ENCODE measurements at regions of chr17 and their contacts with region 1.

Region 1: GRCh38 chr17:38674749-38675615 is at the start of gene EPOP:
- DNase-seq: peak; percentile 85 to 93 (median 91)
- ATAC-seq: peak; percentile 79 to 93 (median 92)
- H3K4me3 ChIP-seq: peak within 1 kb of the TSS; percentile 46 to 79 (median 62)
- H3K27ac ChIP-seq: peak within 1 kb of the TSS in 1 of 12 donors; percentile 42
- H3K4me1 ChIP-seq: peaks cover 4 to 42% (median 24%) of the 10 kb centered on the region in 12 donors
- H3K27me3 ChIP-seq: peaks cover 12 to 61% (median 39%) of the 10 kb centered on the region in 9 donors
- CTCF ChIP-seq: peak in 1 of 12 donors; percentile 4
- POLR2A ChIP-seq: peak in 1 of 2 donors; percentile 53
- total RNA-seq, gene EPOP: 0.25 to 1.6 (median 0.94) TPM

Region 2: DNA sequence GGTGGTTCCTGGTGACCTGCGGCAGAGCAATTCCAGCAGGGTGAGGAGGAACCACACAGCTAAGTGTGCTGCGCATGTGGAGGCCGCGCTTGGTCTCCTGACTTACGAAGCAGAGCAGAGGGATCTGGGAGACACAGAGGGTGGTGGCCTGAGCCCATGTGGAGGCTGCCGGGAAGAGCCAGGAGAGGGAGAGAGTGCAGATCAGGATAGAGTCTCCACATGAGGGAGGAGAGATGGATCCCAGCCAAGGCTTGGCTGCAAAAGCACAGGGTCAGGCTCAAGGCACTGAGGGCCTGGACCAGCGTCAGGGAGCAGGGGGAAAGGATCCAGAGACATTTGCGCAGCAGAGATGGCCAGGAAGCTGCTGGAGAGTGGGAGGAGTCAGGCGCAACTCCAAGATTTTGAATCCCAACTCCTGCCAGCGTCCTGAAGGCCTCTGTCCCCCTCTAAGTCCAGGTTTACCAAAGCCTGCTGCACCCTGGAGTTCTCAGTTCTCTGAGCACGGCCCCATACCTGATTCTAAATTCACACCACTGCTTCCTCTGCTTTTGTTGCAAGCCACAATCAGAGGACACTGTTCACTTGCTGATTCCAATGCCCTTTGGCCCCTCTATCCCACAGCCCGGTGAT is 18.8 kb after region 1 on chr17:
- intact Hi-C with region 1: loop called in 1 of 10 experiments (anchors 2 kb)
- DNase-seq: peak; percentile 91 to 96 (median 94)
- ATAC-seq: peak; percentile 97 to 98 (median 98)
- H3K4me3 ChIP-seq: peak overlapping the region in 3 of 12 donors; percentile 6 to 8 (median 8)
- H3K27ac ChIP-seq: peak overlapping the region; percentile 52 to 89 (median 82)
- H3K4me1 ChIP-seq: peaks cover 0 to 20% (median 15%) of the 10 kb centered on the region in 12 donors
- H3K27me3 ChIP-seq: no peaks in the 10 kb centered on the region
- CTCF ChIP-seq: peak in 1 of 12 donors; percentile 27
- POLR2A ChIP-seq: no peak

Region 3: GRCh38 chr17:38702166-38702899 is 27.4 kb after region 1 on chr17:
- intact Hi-C with region 1: loop called in 1 of 10 experiments (anchors 2 kb)
- DNase-seq: peak; percentile 87 to 93 (median 92)
- ATAC-seq: peak; percentile 43 to 76 (median 68)
- H3K4me3 ChIP-seq: peak overlapping the region; percentile 45 to 97 (median 87)
- H3K27ac ChIP-seq: peak overlapping the region; percentile 82 to 99 (median 97)
- H3K4me1 ChIP-seq: peaks cover 4 to 62% (median 27%) of the 10 kb centered on the region in 12 donors
- H3K27me3 ChIP-seq: no peaks in the 10 kb centered on the region
- CTCF ChIP-seq: no peak
- POLR2A ChIP-seq: peak in 1 of 2 donors; percentile 85

Region 4: DNA sequence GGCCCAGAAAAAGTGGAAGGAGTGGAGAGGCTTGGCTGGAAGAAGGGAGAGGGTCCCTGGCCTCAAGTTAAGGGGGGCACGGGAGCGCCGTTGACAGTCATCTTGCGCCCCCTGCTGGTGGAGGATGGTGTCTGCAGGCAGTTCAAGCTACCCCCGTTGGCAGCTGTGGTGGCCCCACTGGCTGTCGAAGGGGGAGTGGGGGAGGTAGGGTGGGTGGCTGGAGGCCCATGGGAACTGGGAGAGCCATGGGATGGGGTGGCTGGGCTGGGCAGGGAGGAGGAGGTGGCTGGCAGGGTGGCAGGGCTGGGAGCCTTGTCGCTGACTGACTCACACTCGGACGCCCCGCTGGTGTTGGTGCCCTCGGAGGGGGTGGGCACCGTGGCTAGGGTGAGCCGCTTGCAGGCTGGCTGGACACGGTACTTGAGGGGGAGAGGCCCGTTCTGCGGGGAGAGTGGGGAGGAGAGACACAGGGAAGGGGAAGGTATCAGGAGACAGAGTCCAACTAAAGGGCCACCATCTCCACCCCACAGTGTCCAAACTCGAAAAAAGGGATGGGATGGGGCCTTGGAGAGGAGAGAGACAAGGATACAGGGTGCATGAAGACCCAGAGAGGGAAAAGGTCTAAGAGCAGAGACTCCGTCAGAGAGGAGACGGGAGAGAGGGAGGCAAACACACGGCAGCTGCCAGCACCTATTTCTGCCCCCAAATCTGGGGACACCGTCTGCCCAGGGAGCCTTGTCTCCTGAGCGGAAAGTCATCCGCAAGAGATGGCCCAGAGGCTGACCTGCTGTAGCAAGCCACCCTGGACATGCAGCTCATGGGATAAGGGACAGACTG is 60.4 kb after region 1 on chr17:
- intact Hi-C with region 1: loop called (anchors 1 to 5 kb)
- DNase-seq: peak in 4 of 5 donors; percentile 63 to 72 (median 69)
- ATAC-seq: peak; percentile 0 to 26 (median 8)
- H3K4me3 ChIP-seq: no peak overlapping the region
- H3K27ac ChIP-seq: peak overlapping the region in 3 of 12 donors; percentile 4 to 23 (median 13)
- H3K4me1 ChIP-seq: peaks cover 0 to 57% (median 33%) of the 10 kb centered on the region in 12 donors
- H3K27me3 ChIP-seq: no peaks in the 10 kb centered on the region
- CTCF ChIP-seq: peak; percentile 76 to 95 (median 82)
- POLR2A ChIP-seq: no peak

Measured in heart left ventricle (tissue), 16 donors.